Dorsolateral prefrontal cortex (tissue), 120 donors: ENCODE measurements at regions of chr7 and their contacts with region 1.

Region 1: DNA sequence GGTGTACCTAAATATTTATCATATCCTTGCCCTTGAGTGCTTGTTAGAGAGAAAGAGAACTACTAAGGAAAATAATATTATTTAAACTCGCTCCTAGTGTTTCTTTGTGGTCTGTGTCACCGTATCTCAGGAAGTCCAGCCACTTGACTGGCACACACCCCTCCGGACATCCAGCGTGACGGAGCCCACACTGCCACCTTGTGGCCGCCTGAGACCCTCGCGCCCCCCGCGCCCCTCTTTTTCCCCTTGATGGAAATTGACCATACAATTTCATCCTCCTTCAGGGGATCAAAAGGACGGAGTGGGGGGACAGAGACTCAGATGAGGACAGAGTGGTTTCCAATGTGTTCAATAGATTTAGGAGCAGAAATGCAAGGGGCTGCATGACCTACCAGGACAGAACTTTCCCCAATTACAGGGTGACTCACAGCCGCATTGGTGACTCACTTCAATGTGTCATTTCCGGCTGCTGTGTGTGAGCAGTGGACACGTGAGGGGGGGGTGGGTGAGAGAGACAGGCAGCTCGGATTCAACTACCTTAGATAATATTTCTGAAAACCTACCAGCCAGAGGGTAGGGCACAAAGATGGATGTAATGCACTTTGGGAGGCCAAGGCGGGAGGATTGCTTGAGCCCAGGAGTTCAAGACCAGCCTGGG is 11.4 kb downstream of the SERPINE1 start:
- DNase-seq: peak in 5 of 10 donors; percentile 49 to 85 (median 76)
- H3K4me3 ChIP-seq: peak overlapping the region in 3 of 59 donors; percentile 12 to 21 (median 15)
- H3K27ac ChIP-seq: peak overlapping the region in 41 of 59 donors; percentile 3 to 86 (median 57)
- H3K27me3 ChIP-seq: peaks cover 0 to 7% (median 0%) of the 10 kb centered on the region in 45 donors
- CTCF ChIP-seq: peak; percentile 34 to 88 (median 72)

Region 2: DNA sequence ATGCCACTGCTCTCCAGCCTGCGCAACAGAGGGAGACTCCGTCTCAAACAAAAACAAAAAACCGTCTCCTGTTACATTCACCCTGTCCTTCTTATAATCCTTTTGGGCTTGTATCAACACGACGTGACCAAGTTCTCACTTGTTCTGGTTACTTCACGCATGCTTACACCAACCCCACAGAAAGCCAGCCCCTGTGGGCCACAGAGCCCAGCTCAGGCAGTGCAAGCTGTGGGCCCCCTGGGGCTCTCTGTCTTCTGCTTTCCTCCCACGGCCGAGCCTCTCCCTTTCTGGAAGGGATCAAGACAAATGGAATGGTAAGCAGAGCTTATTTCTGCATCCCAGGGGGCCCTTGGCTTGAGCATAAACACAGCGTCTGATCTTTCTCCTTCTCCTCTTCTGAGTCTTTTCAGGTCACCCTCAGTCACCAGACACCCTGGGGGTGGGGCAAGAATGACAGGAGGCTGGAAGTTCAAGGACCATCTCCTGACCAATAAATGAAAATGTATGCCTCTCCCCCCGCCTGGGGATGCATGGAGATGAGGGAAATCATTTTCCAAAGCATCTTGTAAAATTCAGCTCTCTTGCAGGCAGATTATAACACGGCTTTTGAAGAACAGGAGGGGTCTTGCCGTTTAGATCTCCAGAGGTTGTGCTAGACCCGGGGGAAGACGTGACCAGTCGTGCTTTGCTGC is 72.1 kb before region 1 on chr7:
- intact Hi-C with region 1: no loop called
- DNase-seq: peak in 1 of 10 donors; percentile 23
- H3K4me3 ChIP-seq: no peak overlapping the region
- H3K27ac ChIP-seq: no peak overlapping the region
- H3K27me3 ChIP-seq: peaks cover 0 to 34% (median 5%) of the 10 kb centered on the region in 45 donors
- CTCF ChIP-seq: no peak

Region 3: GRCh38 chr7:101077303-101078089 is 60.8 kb before region 1 on chr7:
- intact Hi-C with region 1: no loop called
- DNase-seq: peak in 9 of 10 donors; percentile 62 to 85 (median 79)
- H3K4me3 ChIP-seq: no peak overlapping the region
- H3K27ac ChIP-seq: no peak overlapping the region
- H3K27me3 ChIP-seq: no peaks in the 10 kb centered on the region
- CTCF ChIP-seq: peak; percentile 37 to 83 (median 75)

Region 4: DNA sequence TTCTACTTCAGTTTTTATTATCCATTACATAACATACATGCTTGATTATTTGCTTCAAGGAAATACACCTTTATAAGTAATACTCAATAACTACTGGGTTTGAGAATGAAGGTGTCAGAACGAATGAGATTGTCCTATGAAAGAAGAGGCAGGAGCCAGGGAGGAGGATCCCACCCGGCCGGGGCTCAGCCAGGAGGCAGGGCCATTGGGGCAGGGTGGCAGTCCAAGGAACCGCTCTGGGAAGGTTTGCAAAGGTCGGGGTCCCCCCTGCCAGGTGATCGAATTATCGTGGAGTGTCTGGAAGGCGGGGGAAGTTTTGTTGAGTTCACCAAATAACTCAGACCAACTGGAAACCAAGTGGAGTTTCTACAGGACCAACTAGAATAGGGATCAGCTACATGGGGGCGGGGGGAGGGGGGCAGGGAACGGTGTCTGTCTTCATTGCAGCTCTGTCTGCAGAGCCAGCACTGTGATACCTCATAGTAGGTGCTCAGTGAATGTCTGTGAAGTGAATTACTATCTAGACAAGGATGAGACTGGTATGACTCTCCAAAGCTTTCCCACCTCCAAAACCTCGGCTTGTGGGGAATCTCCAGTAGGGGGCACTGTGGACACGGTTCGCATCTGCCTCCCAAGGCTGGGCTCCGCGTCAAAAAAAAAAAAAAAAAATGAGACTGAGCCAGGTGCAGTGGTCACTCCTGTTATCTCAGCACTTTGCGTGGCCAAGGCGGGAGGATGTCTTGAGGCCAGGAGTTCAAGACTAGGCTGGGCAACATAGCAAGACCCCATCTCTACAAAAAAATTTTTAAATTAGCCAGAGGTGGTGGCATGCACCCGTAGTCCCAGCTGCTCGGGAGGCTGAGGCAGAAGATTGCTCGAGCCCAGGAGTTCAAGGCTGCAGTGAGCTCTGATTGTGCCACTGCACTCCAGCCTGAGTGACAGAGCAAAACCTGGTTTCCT is 43.6 kb before region 1 on chr7:
- intact Hi-C with region 1: loop called in 1 of 2 experiments (anchors 1 kb)
- DNase-seq: peak in 2 of 10 donors; percentile 38 to 51
- H3K4me3 ChIP-seq: no peak overlapping the region
- H3K27ac ChIP-seq: no peak overlapping the region
- H3K27me3 ChIP-seq: no peaks in the 10 kb centered on the region
- CTCF ChIP-seq: peak in 55 of 56 donors; percentile 25 to 74 (median 63)

Region 5: GRCh38 chr7:101099969-101100781 is 38.2 kb before region 1 on chr7:
- intact Hi-C with region 1: loop called in 1 of 2 experiments (anchors 5 kb)
- DNase-seq: peak; percentile 59 to 96 (median 92)
- H3K4me3 ChIP-seq: peak overlapping the region in 31 of 59 donors; percentile 0 to 46 (median 18)
- H3K27ac ChIP-seq: peak overlapping the region in 58 of 59 donors; percentile 40 to 92 (median 74)
- H3K27me3 ChIP-seq: no peaks in the 10 kb centered on the region
- CTCF ChIP-seq: peak in 20 of 56 donors; percentile 7 to 45 (median 25)

Region 6: GRCh38 chr7:101287032-101287431 is 148.7 kb after region 1 on chr7:
- intact Hi-C with region 1: loop called in 1 of 2 experiments (anchors 5 kb)
- DNase-seq: no peak
- H3K4me3 ChIP-seq: no peak overlapping the region
- H3K27ac ChIP-seq: no peak overlapping the region
- H3K27me3 ChIP-seq: peaks cover 0 to 13% (median 4%) of the 10 kb centered on the region in 45 donors
- CTCF ChIP-seq: no peak